CD4-positive, alpha-beta memory T cell (primary cell): ENCODE measurements at regions of chr2 and their contacts with region 1.

Region 1: DNA sequence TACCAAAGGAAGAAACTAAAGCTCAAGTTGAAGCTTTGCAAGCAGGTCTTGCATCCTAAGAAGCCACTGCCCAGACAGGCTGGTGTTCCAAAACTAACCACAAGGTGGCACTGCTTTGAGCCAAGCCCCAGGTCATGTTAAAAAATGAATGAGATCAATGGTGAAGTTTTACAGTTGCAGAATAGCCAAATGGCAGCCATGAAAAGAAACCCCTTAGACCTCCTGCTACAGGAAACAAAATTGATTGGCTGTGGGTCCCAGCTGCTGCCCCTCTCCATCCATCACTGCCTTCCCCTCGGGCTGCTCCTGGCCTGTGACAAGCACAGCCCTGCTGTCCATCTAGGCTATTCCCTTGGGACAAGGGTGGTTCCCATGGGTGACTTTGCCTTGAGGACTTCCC is 20.7 kb upstream of the MREG start:
- DNase-seq: peak; percentile 61 to 72 (median 67)
- H3K4me3 ChIP-seq: no peak overlapping the region
- H3K4me3 Mint-ChIP-seq: no peak overlapping the region
- H3K27ac ChIP-seq: no peak overlapping the region
- H3K27ac Mint-ChIP-seq: peak overlapping the region in 2 of 7 donors; percentile 5 to 66
- H3K4me1 ChIP-seq: no peaks in the 10 kb centered on the region
- H3K4me1 Mint-ChIP-seq: peaks cover 5 to 10% (median 7%) of the 10 kb centered on the region in 4 donors
- H3K27me3 ChIP-seq: no peaks in the 10 kb centered on the region
- H3K27me3 Mint-ChIP-seq: no peaks in the 10 kb centered on the region

Region 2: GRCh38 chr2:216044883-216045486 is 10.9 kb after region 1 on chr2:
- CTCF ChIA-PET with region 1: interaction called, 41 read pairs
- POLR2A ChIA-PET with region 1: no interaction called
- intact Hi-C with region 1: no loop called
- DNase-seq: no peak
- H3K4me3 ChIP-seq: no peak overlapping the region
- H3K4me3 Mint-ChIP-seq: no peak overlapping the region
- H3K27ac ChIP-seq: no peak overlapping the region
- H3K27ac Mint-ChIP-seq: peak overlapping the region in 1 of 7 donors; percentile 12
- H3K4me1 ChIP-seq: no peaks in the 10 kb centered on the region
- H3K4me1 Mint-ChIP-seq: peaks cover 0 to 3% (median under 1%) of the 10 kb centered on the region in 4 donors
- H3K27me3 ChIP-seq: no peaks in the 10 kb centered on the region
- H3K27me3 Mint-ChIP-seq: no peaks in the 10 kb centered on the region

Region 3: DNA sequence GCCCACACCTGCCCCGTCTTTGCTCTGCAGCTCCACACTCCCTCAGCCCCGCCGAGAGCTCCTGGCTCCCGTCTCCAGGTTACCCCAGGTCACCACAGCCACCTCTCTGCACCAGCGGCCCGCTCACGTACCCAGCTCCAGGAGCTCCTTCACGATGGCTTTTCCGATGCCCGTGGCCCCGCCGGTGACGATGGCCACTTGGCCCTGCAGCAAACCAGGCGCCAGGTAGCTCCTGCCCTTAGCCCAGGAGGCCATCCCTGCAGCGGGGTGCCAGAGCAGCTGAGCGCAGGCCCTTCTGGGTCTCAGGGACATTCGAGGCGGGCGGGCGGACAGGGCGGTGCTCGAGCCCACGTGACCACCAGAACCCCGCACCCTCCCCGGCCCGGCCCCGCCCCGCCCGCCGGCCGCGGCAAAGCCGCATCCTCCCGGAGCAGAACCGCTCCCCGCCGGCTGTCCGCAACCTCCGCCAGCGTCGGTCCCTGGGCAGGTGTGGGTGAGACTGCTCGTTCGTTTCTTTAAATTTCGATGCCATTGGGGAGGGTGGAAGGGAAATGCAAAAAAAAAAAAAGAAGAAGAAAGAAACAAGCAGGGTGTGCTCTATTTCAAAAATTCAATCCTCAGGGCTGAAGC is 47.5 kb after region 1 on chr2 and contains the starts of genes PECR and TMEM169:
- CTCF ChIA-PET with region 1: interaction called, 14 read pairs
- POLR2A ChIA-PET with region 1: interaction called, 3 read pairs
- intact Hi-C with region 1: loop called (anchors 2 kb)
- DNase-seq: peak; percentile 69 to 79 (median 74)
- H3K4me3 ChIP-seq: peak within 1 kb of the TSS; percentile 74 to 87
- H3K4me3 Mint-ChIP-seq: peak within 1 kb of the TSS; percentile 83 to 97 (median 94)
- H3K27ac ChIP-seq: peak within 1 kb of the TSS; percentile 65
- H3K27ac Mint-ChIP-seq: peak within 1 kb of the TSS; percentile 78 to 98 (median 92)
- H3K4me1 ChIP-seq: peaks cover 67% of the 10 kb centered on the region
- H3K4me1 Mint-ChIP-seq: peaks cover 41 to 69% (median 55%) of the 10 kb centered on the region in 4 donors
- H3K27me3 ChIP-seq: no peaks in the 10 kb centered on the region
- H3K27me3 Mint-ChIP-seq: no peaks in the 10 kb centered on the region
- total RNA-seq, gene PECR: 16.8 to 20.6 TPM
- total RNA-seq, gene TMEM169: 3.6 to 5.1 TPM

Region 4: DNA sequence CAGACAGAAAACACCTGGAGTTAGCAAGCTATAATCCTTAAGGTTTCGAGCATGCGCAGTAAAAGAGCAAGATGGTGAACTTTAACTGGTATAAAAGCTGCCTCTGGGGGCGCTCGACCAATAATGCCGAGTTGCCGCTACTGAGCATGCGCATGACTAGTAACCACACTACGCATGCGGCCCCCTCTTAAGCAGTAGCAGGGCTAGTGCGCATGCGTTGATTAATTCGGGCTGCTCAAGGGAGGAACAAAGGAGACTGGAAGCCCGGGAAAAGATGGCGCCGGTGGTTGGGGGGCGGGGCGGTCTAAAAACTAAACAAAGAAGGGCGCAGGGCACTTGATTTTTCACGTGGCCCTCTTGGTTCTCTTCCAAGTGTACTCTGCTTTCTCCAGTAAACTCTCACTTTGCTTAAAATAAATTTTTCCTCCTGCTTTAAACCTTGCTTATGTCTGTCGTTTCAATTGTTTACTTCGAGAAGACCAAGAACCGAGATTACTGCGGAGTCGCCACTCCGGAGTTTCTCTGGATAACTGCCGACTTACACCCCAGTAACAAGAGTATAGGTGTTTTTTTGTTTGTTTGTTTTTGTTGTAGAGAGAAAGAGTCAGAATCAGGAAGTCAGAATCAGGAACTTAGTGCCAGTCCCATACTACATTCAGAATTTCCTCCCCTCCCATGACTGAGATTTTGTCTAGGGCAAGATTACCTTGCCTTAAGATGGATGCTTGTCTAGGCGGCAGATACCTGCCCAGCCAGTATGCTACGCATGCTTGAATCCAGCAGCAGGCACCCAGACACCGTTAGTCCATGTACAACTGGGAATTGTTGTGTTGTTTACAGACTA is 80.9 kb after region 1 on chr2:
- CTCF ChIA-PET with region 1: interaction called, 20 read pairs
- POLR2A ChIA-PET with region 1: interaction called, 7 read pairs
- intact Hi-C with region 1: loop called (anchors 10 kb)
- DNase-seq: peak; percentile 96 to 98 (median 96)
- H3K4me3 ChIP-seq: peak overlapping the region; percentile 38 to 60
- H3K4me3 Mint-ChIP-seq: peak overlapping the region; percentile 89 to 98 (median 94)
- H3K27ac ChIP-seq: peak overlapping the region; percentile 70
- H3K27ac Mint-ChIP-seq: peak overlapping the region; percentile 96 to 100 (median 98)
- H3K4me1 ChIP-seq: peaks cover 96% of the 10 kb centered on the region
- H3K4me1 Mint-ChIP-seq: peaks cover 68 to 95% (median 81%) of the 10 kb centered on the region in 4 donors
- H3K27me3 ChIP-seq: no peaks in the 10 kb centered on the region
- H3K27me3 Mint-ChIP-seq: no peaks in the 10 kb centered on the region

Region 5: DNA sequence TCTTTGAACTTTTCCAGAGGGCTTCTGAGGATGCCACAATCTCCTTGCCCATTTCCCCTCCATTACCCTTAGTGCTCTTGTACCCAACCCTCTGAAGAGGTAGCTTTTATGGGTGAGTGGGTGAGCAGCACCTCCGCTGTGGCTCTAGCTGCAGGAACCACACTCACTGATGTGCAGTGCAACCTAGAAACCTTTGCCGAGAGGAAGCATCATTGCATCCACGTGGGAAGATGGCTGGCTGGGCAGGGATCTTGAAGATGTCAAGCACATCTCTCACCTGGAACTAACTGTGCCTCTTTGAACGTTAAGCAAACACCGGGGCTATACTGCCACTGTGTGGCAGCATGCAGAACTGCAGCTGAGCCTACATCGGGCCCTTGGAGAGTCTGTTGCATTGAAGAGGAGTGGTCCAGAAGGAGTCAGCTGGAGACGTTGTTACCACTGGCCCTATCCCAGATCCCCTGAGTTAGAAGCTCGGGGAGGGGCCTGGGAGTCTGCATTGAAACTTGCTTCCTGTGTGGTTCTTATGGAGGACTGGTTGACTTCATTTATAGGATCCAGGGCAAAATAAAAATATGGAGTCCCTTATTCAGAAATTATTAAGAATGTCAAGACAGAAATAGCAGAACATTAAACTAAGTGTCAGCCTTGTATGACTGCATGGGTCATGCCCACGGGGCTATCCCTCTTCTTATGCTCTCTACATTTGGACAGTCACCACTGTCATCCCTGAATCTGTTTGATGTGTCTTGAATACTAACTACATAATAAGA is 632.6 kb after region 1 on chr2:
- CTCF ChIA-PET with region 1: interaction called, 22 read pairs
- POLR2A ChIA-PET with region 1: no interaction called
- intact Hi-C with region 1: no loop called
- DNase-seq: peak; percentile 47 to 64 (median 54)
- H3K4me3 ChIP-seq: no peak overlapping the region
- H3K4me3 Mint-ChIP-seq: no peak overlapping the region
- H3K27ac ChIP-seq: no peak overlapping the region
- H3K27ac Mint-ChIP-seq: no peak overlapping the region
- H3K4me1 ChIP-seq: no peaks in the 10 kb centered on the region
- H3K4me1 Mint-ChIP-seq: no peaks in the 10 kb centered on the region
- H3K27me3 ChIP-seq: no peaks in the 10 kb centered on the region
- H3K27me3 Mint-ChIP-seq: peaks cover 0 to 17% of the 10 kb centered on the region in 2 donors